GM13977 (cell line): ENCODE measurements at regions of chr4 and their contacts with region 1.

Region 1: GRCh38 chr4:166091912-166092510 is 219.0 kb downstream of the TLL1 start:
- DNase-seq: peak; percentile 3
- CTCF ChIP-seq: peak; percentile 57

Region 2: DNA sequence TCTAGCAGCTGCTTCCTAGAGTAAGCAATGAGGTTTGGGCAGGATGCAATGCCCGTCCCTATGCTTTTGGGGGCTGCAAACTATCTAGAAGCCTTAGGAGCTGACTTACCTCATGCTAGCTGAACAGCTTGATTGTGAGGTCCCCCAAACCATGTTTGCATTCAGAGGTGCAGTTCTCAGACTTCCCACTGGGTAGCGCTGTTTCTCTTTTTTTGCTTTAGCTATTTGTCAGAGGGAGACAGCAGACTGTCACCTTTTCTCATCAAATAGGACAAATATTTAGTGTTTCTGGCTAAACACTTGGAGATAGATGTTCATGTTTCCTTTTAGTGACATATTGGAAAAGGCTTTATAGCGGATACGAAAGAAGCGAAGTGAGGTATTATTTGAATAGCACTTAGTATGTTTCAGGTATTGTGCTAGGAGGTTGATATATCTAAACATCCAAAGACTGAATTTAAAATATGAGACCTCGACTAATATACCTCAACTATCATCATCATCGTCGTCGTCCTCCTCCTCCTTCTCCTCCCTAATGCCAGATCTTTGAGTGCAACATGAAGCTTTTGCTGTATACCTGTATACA is 960.7 kb before region 1 on chr4:
- in situ Hi-C with region 1: loop called (anchors 25 kb)
- DNase-seq: peak; percentile 73
- CTCF ChIP-seq: peak; percentile 87

Region 3: GRCh38 chr4:165537028-165537648 is 554.9 kb before region 1 on chr4:
- in situ Hi-C with region 1: loop called (anchors 25 kb)
- DNase-seq: peak; percentile 48
- CTCF ChIP-seq: peak; percentile 58

Region 4: GRCh38 chr4:165810726-165811125 is 281.3 kb before region 1 on chr4:
- in situ Hi-C with region 1: no loop called
- DNase-seq: no peak
- CTCF ChIP-seq: no peak

Region 5: GRCh38 chr4:165844161-165844560 is 247.8 kb before region 1 on chr4:
- in situ Hi-C with region 1: no loop called
- DNase-seq: no peak
- CTCF ChIP-seq: no peak